T-cell (primary cell): ENCODE measurements at regions of chr12 and their contacts with region 1.

Region 1: GRCh38 chr12:116076399-116076798 is 201.1 kb downstream of the MED13L start:
- DNase-seq: no peak
- ATAC-seq: no peak
- H3K4me3 ChIP-seq: no peak overlapping the region
- H3K4me3 Mint-ChIP-seq: no peak overlapping the region
- H3K27ac ChIP-seq: no peak overlapping the region
- H3K27ac Mint-ChIP-seq: no peak overlapping the region
- H3K4me1 ChIP-seq: no peaks in the 10 kb centered on the region
- H3K4me1 Mint-ChIP-seq: peaks cover 18 to 23% (median 22%) of the 10 kb centered on the region in 3 donors
- H3K27me3 ChIP-seq: no peaks in the 10 kb centered on the region
- H3K27me3 Mint-ChIP-seq: no peaks in the 10 kb centered on the region

Region 2: GRCh38 chr12:116045150-116045549 is 31.2 kb before region 1 on chr12:
- CTCF ChIA-PET with region 1: no interaction called
- POLR2A ChIA-PET with region 1: no interaction called
- DNase-seq: no peak
- ATAC-seq: no peak
- H3K4me3 ChIP-seq: no peak overlapping the region
- H3K4me3 Mint-ChIP-seq: no peak overlapping the region
- H3K27ac ChIP-seq: no peak overlapping the region
- H3K27ac Mint-ChIP-seq: no peak overlapping the region
- H3K4me1 ChIP-seq: no peaks in the 10 kb centered on the region
- H3K4me1 Mint-ChIP-seq: peaks cover 47 to 61% (median 51%) of the 10 kb centered on the region in 3 donors
- H3K27me3 ChIP-seq: no peaks in the 10 kb centered on the region
- H3K27me3 Mint-ChIP-seq: no peaks in the 10 kb centered on the region

Region 3: DNA sequence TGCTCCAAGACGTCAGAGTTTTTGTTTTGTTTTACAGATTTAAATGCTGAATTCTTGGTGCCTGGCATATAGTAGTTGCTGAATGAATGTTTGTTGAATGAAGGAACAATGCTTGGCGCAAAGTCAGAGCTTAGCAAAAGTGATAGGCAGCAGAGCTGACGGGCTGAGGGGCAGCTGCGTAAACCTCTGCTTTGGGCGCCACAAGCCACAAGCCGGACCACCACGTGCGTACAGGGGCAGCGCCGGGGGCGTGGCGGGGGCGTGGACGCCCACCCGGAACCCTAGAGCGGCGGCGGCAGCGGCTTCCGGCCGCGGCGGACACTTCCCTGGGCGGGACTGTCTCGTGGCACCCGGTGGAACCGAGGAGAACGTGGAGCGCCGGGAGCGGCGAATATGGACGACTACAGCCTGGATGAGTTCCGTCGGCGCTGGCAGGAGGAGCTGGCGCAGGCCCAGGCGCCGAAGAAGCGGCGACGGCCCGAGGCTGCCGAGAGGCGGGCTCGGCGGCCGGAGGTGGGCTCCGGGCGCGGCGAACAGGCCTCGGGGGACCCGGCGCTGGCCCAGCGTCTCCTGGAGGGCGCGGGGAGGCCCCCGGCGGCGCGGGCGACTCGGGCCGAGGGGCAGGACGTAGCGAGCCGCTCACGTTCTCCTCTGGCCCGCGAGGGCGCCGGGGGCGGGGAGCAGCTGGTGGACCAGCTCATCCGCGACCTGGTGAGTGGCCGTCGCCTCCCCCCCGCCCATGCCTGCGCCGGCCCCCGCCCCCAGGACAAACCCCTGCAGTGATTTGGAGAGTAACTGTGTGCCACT is 834.4 kb after region 1 on chr12 and contains the start of gene FBXW8:
- CTCF ChIA-PET with region 1: no interaction called
- POLR2A ChIA-PET with region 1: interaction called in 1 of 2 experiments, 15 read pairs
- DNase-seq: peak; percentile 2 to 63 (median 42)
- ATAC-seq: peak; percentile 83 to 91 (median 86)
- H3K4me3 ChIP-seq: peak within 1 kb of the TSS; percentile 57 to 78
- H3K4me3 Mint-ChIP-seq: peak within 1 kb of the TSS; percentile 93 to 96 (median 94)
- H3K27ac ChIP-seq: no peak within 1 kb of the TSS
- H3K27ac Mint-ChIP-seq: peak within 1 kb of the TSS; percentile 67 to 88
- H3K4me1 ChIP-seq: peaks cover 3 to 18% of the 10 kb centered on the region in 2 experiments
- H3K4me1 Mint-ChIP-seq: peaks cover 36 to 40% (median 40%) of the 10 kb centered on the region in 3 donors
- H3K27me3 ChIP-seq: no peaks in the 10 kb centered on the region
- H3K27me3 Mint-ChIP-seq: no peaks in the 10 kb centered on the region
- total RNA-seq, gene FBXW8: 10.7 to 17.9 (median 13.0) TPM